Endothelial cell of umbilical vein (primary cell): ENCODE measurements at regions of chr10 and their contacts with region 1.

Region 1: DNA sequence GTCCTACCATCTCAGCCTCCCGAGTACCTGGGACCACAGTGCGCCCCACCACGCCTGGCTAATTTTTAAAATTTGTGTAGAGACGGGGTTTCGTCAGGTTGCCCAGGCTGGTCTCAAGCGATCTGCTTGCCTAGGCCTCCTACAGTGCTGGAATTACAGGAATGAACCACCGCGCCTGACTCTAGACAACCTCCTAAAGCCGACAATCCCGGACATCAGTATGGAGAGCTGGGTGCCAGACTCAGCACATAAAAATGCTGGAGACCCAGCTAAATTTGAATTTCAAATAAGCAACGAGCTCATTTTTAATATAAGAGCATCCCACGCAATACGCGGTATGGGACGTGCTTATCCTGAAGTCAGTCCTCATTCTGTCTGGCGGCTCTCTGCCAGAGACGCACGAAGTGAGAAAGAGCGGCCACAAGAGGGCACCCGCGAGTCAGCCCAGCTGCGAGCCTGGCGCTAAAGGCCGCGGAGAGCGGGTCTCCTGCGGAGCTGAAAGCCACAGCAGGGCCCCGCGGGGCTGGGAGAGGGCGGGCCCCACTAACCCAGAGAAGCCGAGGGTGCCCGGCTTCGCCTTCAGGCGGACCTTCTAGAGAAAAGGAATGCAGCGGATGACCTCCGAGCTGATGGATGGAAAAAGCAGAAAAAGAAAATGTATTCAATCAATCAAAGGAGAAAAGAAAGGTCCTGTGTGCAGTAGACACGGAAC is 7.0 kb downstream of the CALY start:
- DNase-seq: peak; percentile 77
- H3K4me3 ChIP-seq: no peak overlapping the region
- H3K27ac ChIP-seq: no peak overlapping the region
- H3K4me1 ChIP-seq: peaks cover 2% of the 10 kb centered on the region
- H3K27me3 ChIP-seq: peaks cover 39 to 55% of the 10 kb centered on the region in 2 experiments
- CTCF ChIP-seq: peak; percentile 93 to 96
- POLR2A ChIP-seq: no peak

Region 2: DNA sequence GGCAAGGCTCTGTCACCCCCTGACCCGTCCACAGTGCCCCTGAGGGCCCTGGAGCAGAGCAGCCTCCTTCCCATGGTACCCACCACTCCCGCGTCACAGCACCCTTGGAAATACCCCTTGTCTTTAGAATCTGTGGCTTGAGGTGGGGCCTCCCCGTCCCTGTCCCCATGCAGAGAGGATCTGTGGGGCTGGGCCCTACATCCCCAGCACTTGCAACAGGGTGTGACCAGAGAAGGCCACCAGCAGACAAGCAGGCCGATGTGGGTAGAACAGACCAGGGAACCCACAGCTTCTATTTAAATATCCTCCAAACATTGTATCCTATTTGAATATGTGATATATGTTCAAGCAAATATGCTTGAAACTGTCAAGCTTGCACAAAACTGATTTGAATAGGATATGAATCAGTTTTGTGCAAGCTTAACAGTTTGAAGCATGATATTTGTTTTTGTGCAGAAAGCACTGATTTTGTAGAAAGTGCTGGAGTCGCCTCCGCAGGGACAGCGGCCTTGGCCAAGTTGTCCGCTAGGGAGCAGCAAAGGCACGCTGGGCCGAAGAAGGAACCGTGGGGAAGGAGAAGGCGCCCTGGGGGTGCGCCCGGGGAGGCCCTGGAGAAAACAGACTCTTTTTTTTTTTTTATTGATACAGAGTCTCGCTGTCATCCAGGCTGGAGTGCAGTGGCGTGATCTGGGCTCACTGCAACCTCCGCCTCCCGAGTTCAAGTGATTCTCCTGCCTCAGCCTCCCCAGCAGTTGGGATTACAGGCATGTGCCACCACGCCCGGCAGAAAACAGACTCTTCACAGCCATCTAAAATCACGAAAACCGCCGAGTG is 389.5 kb before region 1 on chr10:
- CTCF ChIA-PET with region 1: no interaction called
- POLR2A ChIA-PET with region 1: no interaction called
- dilution Hi-C with region 1: no loop called
- intact Hi-C with region 1: loop called (anchors 5 kb)
- DNase-seq: peak; percentile 30
- H3K4me3 ChIP-seq: no peak overlapping the region
- H3K27ac ChIP-seq: no peak overlapping the region
- H3K4me1 ChIP-seq: no peaks in the 10 kb centered on the region
- H3K27me3 ChIP-seq: no peaks in the 10 kb centered on the region
- CTCF ChIP-seq: peak; percentile 72 to 84
- POLR2A ChIP-seq: no peak

Region 3: GRCh38 chr10:133357285-133358151 is 27.9 kb after region 1 on chr10 and contains the start of gene FUOM:
- CTCF ChIA-PET with region 1: interaction called, 20 read pairs
- POLR2A ChIA-PET with region 1: interaction called, 5 read pairs
- dilution Hi-C with region 1: no loop called
- intact Hi-C with region 1: loop called (anchors 2 kb)
- DNase-seq: peak; percentile 52
- H3K4me3 ChIP-seq: peak within 1 kb of the TSS; percentile 27 to 63 (median 52)
- H3K27ac ChIP-seq: no peak within 1 kb of the TSS
- H3K4me1 ChIP-seq: peaks cover 3% of the 10 kb centered on the region
- H3K27me3 ChIP-seq: no peaks in the 10 kb centered on the region
- CTCF ChIP-seq: no peak
- POLR2A ChIP-seq: no peak
- total RNA-seq, gene FUOM: 16.2 and 17.4 TPM in 2 replicates

Region 4: GRCh38 chr10:133394064-133394663 is 64.5 kb after region 1 on chr10 and contains the start of gene MTG1:
- CTCF ChIA-PET with region 1: interaction called, 8 read pairs
- POLR2A ChIA-PET with region 1: no interaction called
- dilution Hi-C with region 1: no loop called
- intact Hi-C with region 1: loop called (anchors 2 kb)
- DNase-seq: peak; percentile 90
- H3K4me3 ChIP-seq: peak within 1 kb of the TSS; percentile 46 to 83 (median 69)
- H3K27ac ChIP-seq: peak within 1 kb of the TSS; percentile 12
- H3K4me1 ChIP-seq: peaks cover 9% of the 10 kb centered on the region
- H3K27me3 ChIP-seq: no peaks in the 10 kb centered on the region
- CTCF ChIP-seq: peak in 1 of 2 donors; percentile 9
- POLR2A ChIP-seq: peak; percentile 84
- total RNA-seq, gene MTG1: 60.2 and 66.5 TPM in 2 replicates

Region 5: DNA sequence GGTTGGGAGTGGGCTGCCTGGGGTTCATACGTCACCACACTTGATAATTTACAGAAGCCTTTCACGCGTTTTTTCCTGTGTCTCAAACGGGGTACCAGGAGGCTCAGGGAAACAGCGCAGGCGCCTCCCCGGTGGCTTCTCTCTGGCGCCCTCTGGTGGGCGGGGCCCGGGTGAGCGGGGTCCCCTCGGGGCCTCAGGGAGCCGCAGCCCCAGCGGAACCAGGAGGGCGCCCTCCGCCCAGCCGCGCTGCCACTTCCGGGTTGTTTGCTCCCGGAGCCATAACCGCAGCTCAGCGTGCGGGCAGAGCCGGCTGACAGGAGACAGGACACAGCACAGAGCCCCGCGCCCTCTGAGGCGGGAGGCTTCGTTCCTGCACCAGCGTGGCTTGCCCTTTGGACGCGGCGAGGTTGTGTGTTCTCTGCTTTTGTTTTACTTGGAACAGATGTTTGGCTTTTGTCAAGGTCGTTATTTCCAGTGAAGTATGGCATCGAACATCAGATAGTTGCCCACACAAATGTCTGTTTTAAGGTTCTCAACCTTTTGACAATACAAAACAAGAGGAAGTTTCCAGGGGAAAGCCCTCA is 190.6 kb after region 1 on chr10:
- CTCF ChIA-PET with region 1: interaction called, 7 read pairs
- POLR2A ChIA-PET with region 1: no interaction called
- dilution Hi-C with region 1: no loop called
- intact Hi-C with region 1: loop called (anchors 1 kb)
- DNase-seq: peak; percentile 47
- H3K4me3 ChIP-seq: peak overlapping the region in 2 of 3 experiments; percentile 18 to 37
- H3K27ac ChIP-seq: no peak overlapping the region
- H3K4me1 ChIP-seq: no peaks in the 10 kb centered on the region
- H3K27me3 ChIP-seq: peaks cover 0 to 5% of the 10 kb centered on the region in 2 experiments
- CTCF ChIP-seq: peak; percentile 82 to 93
- POLR2A ChIP-seq: no peak